ENCODE measurements at regions of chr21 and their contacts with region 1.

Region 1: GRCh38 chr21:33047231-33047630 is 21.5 kb downstream of the OLIG2 start:
- DNase-seq: no peak
- H3K4me3 ChIP-seq: no peak overlapping the region
- H3K4me3 Mint-ChIP-seq: no peak overlapping the region
- H3K27ac Mint-ChIP-seq: no peak overlapping the region
- H3K4me1 ChIP-seq: no peaks in the 10 kb centered on the region
- H3K4me1 Mint-ChIP-seq: no peaks in the 10 kb centered on the region
- H3K27me3 ChIP-seq: no peaks in the 10 kb centered on the region
- H3K27me3 Mint-ChIP-seq: peaks cover 24% of the 10 kb centered on the region
- CTCF ChIP-seq: no peak

Region 2: DNA sequence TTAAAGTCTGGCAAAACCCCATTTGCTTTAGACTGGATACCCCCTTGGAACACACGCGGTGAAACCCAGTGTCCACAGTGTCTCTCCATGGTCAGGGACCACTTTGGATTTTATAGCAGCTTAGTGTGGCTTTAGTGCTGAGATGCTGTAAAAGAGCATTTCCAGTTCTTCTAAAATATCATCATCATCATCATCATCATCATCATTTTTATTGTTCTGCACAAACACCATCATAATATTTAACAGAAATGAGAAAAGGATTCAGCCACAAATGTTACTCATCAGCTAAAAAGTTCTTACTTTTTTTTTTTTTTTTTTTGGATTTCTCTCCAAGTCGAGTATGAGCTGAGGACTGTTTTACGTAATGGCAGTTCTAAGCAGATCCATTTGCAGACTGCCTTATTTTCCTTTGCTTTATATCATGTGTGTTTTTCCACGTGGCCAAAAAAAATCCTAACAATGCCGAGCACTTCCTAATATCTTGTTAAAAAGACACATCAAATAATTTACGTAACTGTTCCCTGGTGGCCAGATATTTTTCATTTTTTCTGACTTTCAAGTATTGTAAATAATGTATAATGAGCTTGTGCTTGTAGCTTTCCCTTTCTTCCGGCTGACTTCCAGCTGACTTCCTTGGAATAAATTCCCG is 571.9 kb before region 1 on chr21:
- CTCF ChIA-PET with region 1: interaction called, 11 read pairs
- POLR2A ChIA-PET with region 1: no interaction called
- intact Hi-C with region 1: no loop called
- DNase-seq: no peak
- H3K4me3 ChIP-seq: no peak overlapping the region
- H3K4me3 Mint-ChIP-seq: no peak overlapping the region
- H3K27ac Mint-ChIP-seq: no peak overlapping the region
- H3K4me1 ChIP-seq: peaks cover 4% of the 10 kb centered on the region; the same call in 1 of the 2 replicates
- H3K4me1 Mint-ChIP-seq: no peaks in the 10 kb centered on the region
- H3K27me3 ChIP-seq: no peaks in the 10 kb centered on the region
- H3K27me3 Mint-ChIP-seq: no peaks in the 10 kb centered on the region
- CTCF ChIP-seq: no peak

Measured in Caco-2 (cell line).